Panc1 (cell line): ENCODE measurements at regions of chrX and their contacts with region 1.

Region 1: GRCh38 chrX:102659790-102660757 is 8.8 kb downstream of the GPRASP1 start:
- DNase-seq: peak; percentile 53
- ATAC-seq: peak; percentile 97
- H3K4me3 ChIP-seq: peak overlapping the region; percentile 62 to 98
- H3K27ac ChIP-seq: peak overlapping the region; percentile 77
- H3K4me1 ChIP-seq: peaks cover 4% of the 10 kb centered on the region
- H3K27me3 ChIP-seq: no peaks in the 10 kb centered on the region
- CTCF ChIP-seq: no peak

Region 2: DNA sequence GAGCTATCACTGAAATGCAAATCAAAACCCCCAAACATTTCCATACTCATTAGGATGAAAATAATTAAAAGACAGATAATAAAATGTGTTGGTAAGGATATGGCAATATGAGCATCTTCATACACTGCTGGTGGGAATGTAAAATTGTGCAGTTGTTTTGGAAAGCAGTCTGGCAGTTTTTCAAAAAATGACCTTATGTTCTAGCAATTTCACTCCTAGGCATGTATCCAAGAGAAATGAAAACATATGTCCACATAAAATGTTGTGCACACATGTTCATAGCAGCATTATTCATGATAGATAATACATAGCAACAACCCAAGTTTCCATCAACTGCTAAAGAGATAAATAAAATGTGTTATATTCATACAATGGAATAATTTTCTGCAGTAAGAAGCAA is 37.4 kb after region 1 on chrX:
- CTCF ChIA-PET with region 1: no interaction called
- POLR2A ChIA-PET with region 1: no interaction called
- in situ Hi-C with region 1: no loop called
- intact Hi-C with region 1: loop called (anchors 5 kb)
- DNase-seq: no peak
- ATAC-seq: no peak
- H3K4me3 ChIP-seq: no peak overlapping the region
- H3K27ac ChIP-seq: no peak overlapping the region
- H3K4me1 ChIP-seq: no peaks in the 10 kb centered on the region; the same call in 1 of the 2 replicates
- H3K27me3 ChIP-seq: no peaks in the 10 kb centered on the region
- CTCF ChIP-seq: no peak

Region 3: DNA sequence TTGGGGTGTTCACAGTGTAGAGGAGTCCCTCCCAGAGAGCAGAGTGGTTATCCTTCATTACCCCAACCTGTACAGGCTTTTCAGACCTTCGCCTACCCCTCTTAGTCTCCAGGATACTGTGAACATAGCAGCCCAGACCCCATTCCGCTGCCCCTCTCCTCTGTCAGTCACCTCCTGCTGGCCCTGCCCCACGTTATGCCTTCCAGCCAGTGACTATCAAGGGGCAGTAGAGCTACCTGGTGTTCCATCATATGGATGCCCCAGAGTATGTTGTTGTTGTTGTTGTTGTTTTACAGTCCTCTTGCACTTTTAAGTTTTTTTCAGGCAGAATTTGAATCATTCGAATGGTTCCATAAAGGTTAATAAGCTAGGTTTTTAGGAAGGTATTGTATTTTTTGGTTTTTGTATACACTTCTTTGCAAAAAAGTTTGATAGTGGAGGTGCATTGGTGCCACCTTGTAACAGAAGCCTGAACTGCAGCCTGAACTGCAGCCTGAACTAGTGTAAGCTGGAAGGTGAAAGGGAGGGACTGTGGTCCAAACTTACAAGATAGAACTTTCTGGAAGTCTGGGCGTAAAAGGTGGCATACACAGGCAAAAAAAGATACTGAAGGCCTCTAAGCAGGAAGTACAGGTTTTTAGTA is 175.6 kb after region 1 on chrX:
- CTCF ChIA-PET with region 1: no interaction called
- POLR2A ChIA-PET with region 1: no interaction called
- in situ Hi-C with region 1: no loop called
- intact Hi-C with region 1: loop called (anchors 10 kb)
- DNase-seq: peak; percentile 25
- ATAC-seq: peak; percentile 80
- H3K4me3 ChIP-seq: no peak overlapping the region
- H3K27ac ChIP-seq: no peak overlapping the region
- H3K4me1 ChIP-seq: no peaks in the 10 kb centered on the region
- H3K27me3 ChIP-seq: no peaks in the 10 kb centered on the region
- CTCF ChIP-seq: peak; percentile 78